Dendritic cell treated with granulocyte-macrophage colony-stimulating factor and Interleukin-4, amounts not matched to agents 40 ng/mL and 50 ng/mL, for 4 days (primary cell): ENCODE measurements at regions of chr9 and their contacts with region 1.

Region 1: DNA sequence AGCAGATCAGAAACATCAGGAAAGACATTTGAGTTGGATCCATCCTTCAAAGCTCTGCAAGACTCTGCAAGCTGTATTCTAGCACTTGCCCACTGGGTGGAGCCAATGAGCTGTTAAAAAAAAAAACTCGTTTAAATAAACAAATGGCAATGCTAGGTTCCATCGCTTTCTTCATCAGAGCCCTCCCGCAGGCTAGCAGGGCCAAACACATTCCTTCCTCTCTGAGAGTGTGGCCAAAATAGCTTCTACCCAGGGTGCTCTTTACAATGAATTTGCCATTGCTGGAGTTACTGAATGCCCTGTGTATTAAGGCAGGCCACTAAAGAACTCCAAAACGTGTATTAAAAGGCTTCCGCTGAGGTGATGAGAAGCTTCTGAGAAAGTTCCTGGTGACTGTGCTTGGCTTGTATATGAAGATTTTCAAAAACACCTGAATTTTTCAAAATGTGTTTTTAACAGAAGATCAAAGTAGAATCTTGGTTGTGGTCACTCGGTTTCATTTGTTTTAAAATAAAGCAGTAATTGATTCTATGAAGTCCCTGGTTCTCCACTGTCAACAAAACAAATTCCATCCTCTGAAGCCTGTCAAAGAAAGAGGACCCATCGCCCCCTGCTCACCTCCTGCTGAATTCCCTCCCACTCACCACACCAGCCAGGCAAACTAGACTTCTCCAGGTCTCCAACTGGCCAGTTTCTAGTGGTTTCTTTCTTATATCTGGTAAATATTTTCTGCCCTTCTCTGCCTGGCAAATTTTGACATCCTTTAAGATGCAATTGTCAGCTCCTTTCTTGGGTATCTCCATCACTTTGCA is 36.5 kb upstream of the EQTN start:
- H3K4me3 Mint-ChIP-seq: no peak overlapping the region
- H3K27ac Mint-ChIP-seq: peak overlapping the region; percentile 94
- H3K4me1 Mint-ChIP-seq: peaks cover 70% of the 10 kb centered on the region
- H3K27me3 Mint-ChIP-seq: no peaks in the 10 kb centered on the region

Region 2: DNA sequence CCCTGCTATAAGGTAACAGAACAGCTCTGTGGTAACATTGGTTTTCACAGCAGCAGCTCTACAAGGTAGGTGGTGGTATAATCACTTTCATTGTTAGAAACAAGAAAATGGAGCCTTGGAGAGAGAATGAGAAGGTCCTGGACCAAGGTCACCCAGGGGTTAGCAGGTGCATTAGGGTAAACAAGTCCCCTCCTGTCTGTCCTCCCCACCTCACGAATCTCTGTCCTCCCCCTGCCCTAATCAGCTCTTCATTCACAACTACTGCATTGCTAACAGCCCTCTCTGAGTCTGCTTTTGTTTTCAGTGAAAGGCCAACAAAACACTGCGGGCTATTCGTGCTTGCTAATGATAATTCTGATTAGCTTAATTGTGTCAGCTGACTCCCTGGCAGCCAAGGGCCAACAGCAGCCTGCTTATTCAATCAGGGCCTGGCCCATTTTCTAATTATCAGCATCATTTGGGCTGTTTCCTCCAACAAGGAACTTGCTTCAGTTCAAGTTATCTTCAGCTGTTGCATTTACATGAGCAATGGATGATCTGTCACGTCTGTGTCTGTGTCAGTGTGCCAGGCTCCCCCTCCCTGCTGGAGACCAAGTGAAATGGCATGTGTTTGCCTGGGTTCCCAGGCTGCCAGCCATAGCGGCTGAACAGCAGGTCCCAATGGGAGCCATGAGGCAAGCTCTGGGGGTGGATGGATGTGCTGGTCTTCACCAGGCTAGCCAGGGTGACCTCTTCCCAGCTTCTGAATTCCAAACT is 20.2 kb after region 1 on chr9:
- intact Hi-C with region 1: loop called (anchors 1 kb)
- H3K4me3 Mint-ChIP-seq: no peak overlapping the region
- H3K27ac Mint-ChIP-seq: peak overlapping the region; percentile 77
- H3K4me1 Mint-ChIP-seq: peaks cover 82% of the 10 kb centered on the region
- H3K27me3 Mint-ChIP-seq: no peaks in the 10 kb centered on the region

Region 3: GRCh38 chr9:27460226-27461023 is 127.0 kb after region 1 on chr9:
- intact Hi-C with region 1: loop called (anchors 2 kb)
- H3K4me3 Mint-ChIP-seq: no peak overlapping the region
- H3K27ac Mint-ChIP-seq: peak overlapping the region; percentile 71
- H3K4me1 Mint-ChIP-seq: peaks cover 75% of the 10 kb centered on the region
- H3K27me3 Mint-ChIP-seq: no peaks in the 10 kb centered on the region

Region 4: DNA sequence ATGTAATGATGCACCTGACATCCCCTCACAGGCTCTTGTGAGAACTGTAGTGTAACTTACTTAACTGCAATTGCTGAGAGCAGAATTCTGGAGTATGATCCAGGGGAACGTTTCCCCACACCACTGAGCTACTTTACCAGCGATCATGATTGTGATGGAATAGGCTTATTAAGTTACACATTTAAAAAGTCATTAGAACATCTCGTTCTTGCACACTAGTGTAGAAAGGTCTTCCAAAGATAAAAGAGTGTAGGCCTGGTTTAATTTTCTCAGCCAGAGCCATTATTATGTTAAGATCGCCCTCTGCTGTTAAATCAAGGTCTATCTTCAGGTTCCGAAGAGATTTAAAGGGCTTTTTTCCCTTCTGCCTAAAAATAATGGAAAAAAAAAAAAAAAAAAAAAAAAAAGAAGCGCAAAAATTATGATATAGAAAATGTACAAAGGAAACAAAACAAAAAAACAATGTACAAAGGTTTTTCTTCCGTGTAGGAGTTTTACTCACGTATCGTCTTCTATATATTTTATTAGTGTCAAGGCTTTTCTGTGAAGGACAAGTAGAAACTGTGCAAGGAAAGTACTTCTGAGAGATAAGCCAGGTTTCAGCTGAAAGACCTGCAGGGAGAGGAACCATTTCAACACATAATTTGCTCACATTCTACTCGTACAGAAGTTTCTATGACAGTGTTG is 214.8 kb after region 1 on chr9:
- intact Hi-C with region 1: loop called (anchors 1 kb)
- H3K4me3 Mint-ChIP-seq: no peak overlapping the region
- H3K27ac Mint-ChIP-seq: no peak overlapping the region
- H3K4me1 Mint-ChIP-seq: peaks cover 15% of the 10 kb centered on the region
- H3K27me3 Mint-ChIP-seq: no peaks in the 10 kb centered on the region

Region 5: DNA sequence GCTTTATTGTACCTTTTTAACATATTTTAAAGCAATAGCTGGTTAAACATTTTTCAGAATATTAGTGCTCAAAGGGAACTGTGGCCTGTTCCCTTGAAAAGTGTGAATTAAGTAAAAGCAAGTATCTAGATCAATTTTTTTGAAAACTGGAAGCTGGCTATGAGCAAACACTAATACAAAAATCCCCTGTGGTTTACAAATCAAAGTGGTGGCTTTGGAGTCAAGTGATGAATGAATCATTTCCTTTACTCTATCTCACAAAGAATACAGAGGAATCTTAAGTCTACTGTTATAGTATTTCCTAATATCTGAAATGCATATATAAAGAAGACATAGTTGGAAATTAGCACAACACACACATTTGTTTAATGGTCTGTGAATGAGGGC is 452.3 kb after region 1 on chr9:
- intact Hi-C with region 1: loop called (anchors 5 kb)
- H3K4me3 Mint-ChIP-seq: no peak overlapping the region
- H3K27ac Mint-ChIP-seq: no peak overlapping the region
- H3K4me1 Mint-ChIP-seq: peaks cover 7% of the 10 kb centered on the region
- H3K27me3 Mint-ChIP-seq: peaks cover 11% of the 10 kb centered on the region